ENCODE measurements at regions of chr3 and their contacts with region 1.

Region 1: DNA sequence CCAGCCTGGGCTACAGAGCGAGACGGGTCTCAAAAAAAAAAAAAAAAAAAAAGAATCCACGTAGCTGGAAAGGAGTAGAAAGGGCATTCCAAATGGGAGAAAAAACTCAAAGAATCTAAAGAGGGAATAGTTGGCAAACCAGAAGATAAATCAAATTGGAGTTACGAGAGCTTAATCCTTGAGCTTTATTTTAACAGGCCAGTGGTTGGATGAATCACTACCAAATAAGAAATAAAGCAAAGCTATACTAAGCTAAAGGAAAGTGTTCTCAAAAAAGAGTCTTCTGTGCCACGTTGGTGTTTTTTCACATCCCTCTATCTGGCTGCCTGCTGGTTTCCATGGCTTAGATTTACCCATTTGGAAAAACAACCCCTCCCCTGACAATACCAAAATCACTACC is 14.0 kb downstream of the VGLL4 start:
- DNase-seq: peak; percentile 59
- H3K4me3 ChIP-seq: no peak overlapping the region
- H3K27ac ChIP-seq: peak overlapping the region; percentile 77
- H3K27me3 ChIP-seq: no peaks in the 10 kb centered on the region
- CTCF ChIP-seq: no peak

Region 2: DNA sequence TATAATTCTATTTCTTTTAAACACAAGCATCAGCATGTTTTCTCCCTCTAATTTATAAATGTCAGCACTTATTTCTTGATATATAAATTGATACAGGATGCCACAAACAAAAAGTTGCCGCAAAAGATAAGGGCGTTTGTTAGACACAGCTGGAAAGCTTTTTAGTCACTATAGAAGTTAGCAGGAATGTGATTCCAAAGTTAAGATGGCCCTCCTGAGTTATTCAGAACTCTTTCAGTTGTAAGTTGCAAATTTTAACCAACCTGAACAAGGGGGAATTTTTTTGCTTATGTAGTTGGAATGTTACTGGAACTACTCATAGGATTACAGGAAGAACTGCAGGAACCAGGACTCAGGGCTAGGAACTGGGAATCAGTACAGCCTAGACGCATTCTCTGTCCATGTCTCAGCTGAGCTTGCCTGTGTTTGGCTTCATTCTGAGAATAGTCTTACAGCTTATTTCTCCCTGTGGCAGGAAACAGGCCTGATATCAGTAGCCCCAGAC is 152.3 kb before region 1 on chr3:
- CTCF ChIA-PET with region 1: no interaction called
- POLR2A ChIA-PET with region 1: interaction called, 10 read pairs
- DNase-seq: peak; percentile 76
- H3K4me3 ChIP-seq: no peak overlapping the region; the same call in 1 of the 2 replicates
- H3K27ac ChIP-seq: peak overlapping the region; percentile 92
- H3K27me3 ChIP-seq: no peaks in the 10 kb centered on the region
- CTCF ChIP-seq: no peak

Region 3: GRCh38 chr3:11791339-11792128 is 161.8 kb after region 1 on chr3:
- CTCF ChIA-PET with region 1: no interaction called
- POLR2A ChIA-PET with region 1: no interaction called
- DNase-seq: no peak
- H3K4me3 ChIP-seq: no peak overlapping the region
- H3K27ac ChIP-seq: no peak overlapping the region
- H3K27me3 ChIP-seq: no peaks in the 10 kb centered on the region
- CTCF ChIP-seq: no peak

Region 4: DNA sequence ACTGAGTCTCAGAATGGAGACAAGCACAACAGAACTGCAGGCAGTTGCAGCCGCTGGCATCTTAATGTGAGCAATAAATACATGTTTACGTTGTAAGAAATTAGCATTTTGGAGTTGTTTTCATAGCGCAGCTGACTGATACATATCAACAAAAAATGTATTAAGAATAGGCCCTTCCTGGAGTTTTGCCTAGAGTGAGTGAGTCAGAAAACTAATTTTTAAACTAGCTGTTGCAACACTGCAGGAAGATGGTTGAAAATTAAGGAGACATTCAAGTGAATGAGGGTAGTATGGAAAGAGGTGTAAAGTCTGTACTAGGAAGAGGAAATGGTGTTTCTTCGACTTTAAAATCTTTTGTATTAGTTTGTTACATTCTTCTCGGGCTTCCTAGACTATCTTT is 568.6 kb after region 1 on chr3:
- CTCF ChIA-PET with region 1: no interaction called
- POLR2A ChIA-PET with region 1: interaction called, 10 read pairs
- DNase-seq: no peak
- H3K4me3 ChIP-seq: no peak overlapping the region
- H3K27ac ChIP-seq: no peak overlapping the region
- H3K27me3 ChIP-seq: no peaks in the 10 kb centered on the region
- CTCF ChIP-seq: no peak